ENCODE measurements at regions of chr2 and their contacts with region 1.

Region 1: GRCh38 chr2:65432227-65433190 is at the start of gene SPRED2:
- DNase-seq: peak; percentile 73
- H3K4me3 Mint-ChIP-seq: peak within 1 kb of the TSS; percentile 87
- H3K27ac Mint-ChIP-seq: peak within 1 kb of the TSS; percentile 76
- H3K4me1 Mint-ChIP-seq: peaks cover 19% of the 10 kb centered on the region
- H3K27me3 Mint-ChIP-seq: peaks cover 46% of the 10 kb centered on the region
- total RNA-seq, gene SPRED2: 7.9 and 8.4 TPM in 2 replicates

Region 2: DNA sequence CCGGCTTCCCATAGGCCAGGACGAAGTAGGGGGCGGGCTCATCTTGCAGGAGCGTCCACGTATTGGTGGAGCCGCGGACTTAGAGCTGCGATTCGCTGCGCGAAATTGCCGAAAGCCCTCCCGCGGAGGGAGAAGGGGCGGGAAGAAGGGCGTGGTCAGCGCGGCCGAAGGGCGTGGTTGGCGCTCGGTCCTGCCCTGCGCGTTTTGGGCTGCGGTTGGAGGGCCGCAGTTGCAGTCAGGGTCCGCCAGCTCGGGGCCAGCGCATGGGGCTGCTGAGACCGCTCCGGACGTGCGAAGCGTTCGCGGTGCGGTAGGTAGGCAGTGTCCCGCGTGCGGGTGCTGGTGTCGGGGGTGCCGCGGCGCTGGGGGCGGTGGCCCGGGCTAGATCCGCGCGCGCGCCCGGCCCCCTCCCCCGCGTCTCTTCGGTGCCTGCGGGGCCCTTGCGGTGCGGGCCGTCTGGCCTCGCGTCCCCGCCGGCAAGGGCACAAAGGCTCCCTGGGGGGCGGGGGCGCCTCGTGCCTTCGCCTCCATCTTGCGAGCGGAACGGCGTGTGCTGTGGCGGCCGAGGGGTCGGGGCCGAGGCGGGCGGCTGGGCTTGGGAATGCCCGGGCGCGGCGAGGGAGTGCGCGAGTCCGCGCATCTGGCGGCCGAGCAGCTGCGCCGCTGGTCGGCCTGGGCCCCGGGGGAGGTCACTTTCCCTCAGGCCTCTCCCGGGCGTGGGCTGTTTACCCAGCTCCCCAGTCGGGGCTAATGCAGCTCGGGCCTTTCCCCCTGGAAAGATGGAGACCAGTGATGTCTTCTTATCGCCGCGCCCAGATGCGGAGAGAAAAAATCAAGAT is 376.1 kb before region 1 on chr2 and contains the start of gene CEP68:
- intact Hi-C with region 1: loop called (anchors 5 kb)
- DNase-seq: peak; percentile 96
- H3K4me3 Mint-ChIP-seq: peak within 1 kb of the TSS; percentile 92
- H3K27ac Mint-ChIP-seq: peak within 1 kb of the TSS; percentile 73
- H3K4me1 Mint-ChIP-seq: peaks cover 52% of the 10 kb centered on the region
- H3K27me3 Mint-ChIP-seq: no peaks in the 10 kb centered on the region
- total RNA-seq, gene CEP68: 5.9 and 6.1 TPM in 2 replicates

Region 3: GRCh38 chr2:65227425-65228262 is 204.9 kb before region 1 on chr2 and contains the start of gene ACTR2:
- intact Hi-C with region 1: loop called (anchors 2 kb)
- DNase-seq: peak; percentile 95
- H3K4me3 Mint-ChIP-seq: peak within 1 kb of the TSS; percentile 98
- H3K27ac Mint-ChIP-seq: peak within 1 kb of the TSS; percentile 96
- H3K4me1 Mint-ChIP-seq: peaks cover 27% of the 10 kb centered on the region
- H3K27me3 Mint-ChIP-seq: no peaks in the 10 kb centered on the region
- total RNA-seq, gene ACTR2: 339 and 350 TPM in 2 replicates

Region 4: GRCh38 chr2:65300761-65301711 is 131.5 kb before region 1 on chr2:
- intact Hi-C with region 1: loop called (anchors 1 kb)
- DNase-seq: peak; percentile 69
- H3K4me3 Mint-ChIP-seq: peak overlapping the region; percentile 55
- H3K27ac Mint-ChIP-seq: peak overlapping the region; percentile 86
- H3K4me1 Mint-ChIP-seq: peaks cover 53% of the 10 kb centered on the region
- H3K27me3 Mint-ChIP-seq: peaks cover 13% of the 10 kb centered on the region

Region 5: DNA sequence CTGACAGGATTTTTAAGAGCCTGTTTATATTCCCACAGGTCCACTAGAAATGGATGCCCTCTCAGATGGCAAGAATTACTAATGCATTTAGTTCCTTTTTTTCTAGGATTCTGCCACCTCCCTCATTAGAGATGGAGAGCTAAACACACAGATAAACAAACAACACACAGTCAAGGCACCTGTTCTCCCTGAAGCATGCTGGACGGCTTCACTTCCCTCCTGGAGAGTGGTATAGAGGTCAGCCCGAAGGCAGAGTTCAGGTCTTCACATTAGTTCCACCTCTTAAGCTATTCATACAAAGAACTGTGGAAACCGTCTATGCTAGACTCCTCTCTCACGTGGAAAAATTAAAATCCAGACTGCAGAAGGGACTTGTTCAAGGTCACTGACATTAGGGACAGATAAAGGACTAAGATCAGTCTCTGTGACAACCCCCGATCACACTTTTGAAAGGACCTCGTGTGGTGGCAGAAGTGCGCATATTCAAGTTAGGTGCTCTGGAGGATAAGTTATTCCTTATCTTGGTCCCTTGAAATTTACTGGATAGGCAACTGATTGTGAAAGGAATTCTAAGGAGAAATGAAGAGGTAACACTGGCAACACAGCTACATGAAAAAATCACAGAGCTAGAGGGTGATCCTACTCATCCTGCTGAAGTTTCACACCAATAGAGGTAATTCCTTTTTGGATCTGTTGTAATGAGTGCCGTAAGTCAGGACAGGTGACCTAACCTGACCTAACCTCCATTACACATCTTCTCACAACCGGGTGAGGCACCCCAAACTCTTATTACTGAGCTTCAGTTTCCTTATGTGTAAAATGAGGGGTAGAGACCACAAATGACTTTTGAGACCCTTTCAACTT is 75.2 kb before region 1 on chr2:
- intact Hi-C with region 1: loop called (anchors 1 kb)
- DNase-seq: no peak
- H3K4me3 Mint-ChIP-seq: no peak overlapping the region
- H3K27ac Mint-ChIP-seq: no peak overlapping the region
- H3K4me1 Mint-ChIP-seq: peaks cover 59% of the 10 kb centered on the region
- H3K27me3 Mint-ChIP-seq: peaks cover 16% of the 10 kb centered on the region

Region 6: DNA sequence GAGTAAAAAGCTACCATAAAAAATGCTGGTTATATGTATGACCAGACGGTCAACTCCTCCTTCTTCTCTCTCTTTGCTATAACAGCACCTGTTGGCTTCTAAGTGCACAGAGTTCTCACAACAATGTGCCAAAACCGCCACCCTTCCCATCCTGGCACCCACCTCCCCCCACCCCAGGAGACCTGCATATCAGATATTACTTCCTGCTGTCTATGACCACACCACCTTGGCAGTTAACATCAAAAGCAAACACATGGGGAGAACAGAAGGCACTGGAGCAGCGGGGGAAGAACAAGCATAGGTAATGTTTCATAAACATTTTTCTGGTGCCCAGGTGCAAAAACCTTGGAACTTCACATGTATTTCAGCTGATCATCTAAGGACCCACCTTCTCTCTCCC is 15.6 kb before region 1 on chr2:
- intact Hi-C with region 1: loop called (anchors 1 kb)
- DNase-seq: no peak
- H3K4me3 Mint-ChIP-seq: no peak overlapping the region
- H3K27ac Mint-ChIP-seq: peak overlapping the region; percentile 52
- H3K4me1 Mint-ChIP-seq: peaks cover 35% of the 10 kb centered on the region
- H3K27me3 Mint-ChIP-seq: peaks cover 16% of the 10 kb centered on the region

Measured in activated T-helper 2 cell treated with anti-CD3 and anti-CD28 coated beads, Interferon-gamma antibody, Interleukin-2, Interleukin-4, amounts not matched to agents 10 μg/mL and 5 μg/mL and 100 μg/mL, durations not matched to agents 14 hours and 24 hours and 36 hours (primary cell).